A549 (cell line): ENCODE measurements at regions of chr6 and their contacts with region 1.

Region 1: DNA sequence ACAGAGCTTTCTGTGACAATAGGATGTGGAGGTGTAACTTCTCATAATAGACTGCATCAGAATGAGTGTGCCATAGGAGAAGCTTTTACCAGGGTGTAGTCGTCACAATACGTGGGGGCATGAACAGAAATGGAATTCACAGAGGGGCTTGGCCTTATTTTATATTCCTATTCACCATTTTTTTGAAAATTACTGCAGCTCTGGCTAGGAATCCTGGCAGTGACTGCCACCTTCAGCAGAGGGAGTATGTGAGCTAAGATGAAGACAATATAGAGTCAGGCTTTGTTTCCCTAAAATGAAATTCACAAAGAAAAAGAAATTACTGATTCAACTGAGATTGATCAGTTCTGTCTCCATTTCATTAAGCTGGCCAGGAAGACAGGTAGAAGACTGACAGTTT is 13.9 kb downstream of the TOMM6 start:
- DNase-seq: peak in 1 of 2 experiments; percentile 31
- ATAC-seq: peak; percentile 73 to 77; a peak in 4 of 6 replicates
- H3K4me3 ChIP-seq: no peak overlapping the region
- H3K27ac ChIP-seq: no peak overlapping the region
- H3K4me1 ChIP-seq: 0 out of 3 replicates have a peak, but pooled peaks cover 3% of the 10 kb centered on the region
- CTCF ChIP-seq: peak; percentile 50
- EP300 ChIP-seq: no peak
- POLR2A ChIP-seq: no peak
- RAD21 ChIP-seq: peak; percentile 64 to 69

Region 2: GRCh38 chr6:41430875-41431274 is 370.5 kb before region 1 on chr6:
- CTCF ChIA-PET with region 1: no interaction called
- POLR2A ChIA-PET with region 1: no interaction called
- DNase-seq: peak in 1 of 2 experiments; percentile 22
- ATAC-seq: peak; percentile 67 to 70; a peak in 5 of 6 replicates
- H3K4me3 ChIP-seq: no peak overlapping the region
- H3K27ac ChIP-seq: peak overlapping the region in 1 of 2 experiments; percentile 72; a peak in 3 of 6 replicates
- H3K4me1 ChIP-seq: peaks cover 15% of the 10 kb centered on the region
- CTCF ChIP-seq: no peak
- EP300 ChIP-seq: no peak
- POLR2A ChIP-seq: no peak
- RAD21 ChIP-seq: no peak

Region 3: GRCh38 chr6:41813469-41813868 is 12.1 kb after region 1 on chr6:
- CTCF ChIA-PET with region 1: interaction called, 14 read pairs
- POLR2A ChIA-PET with region 1: no interaction called
- DNase-seq: no peak
- ATAC-seq: no peak
- H3K4me3 ChIP-seq: no peak overlapping the region
- H3K27ac ChIP-seq: no peak overlapping the region
- H3K4me1 ChIP-seq: no peaks in the 10 kb centered on the region
- CTCF ChIP-seq: no peak
- EP300 ChIP-seq: no peak
- POLR2A ChIP-seq: no peak
- RAD21 ChIP-seq: no peak

Region 4: DNA sequence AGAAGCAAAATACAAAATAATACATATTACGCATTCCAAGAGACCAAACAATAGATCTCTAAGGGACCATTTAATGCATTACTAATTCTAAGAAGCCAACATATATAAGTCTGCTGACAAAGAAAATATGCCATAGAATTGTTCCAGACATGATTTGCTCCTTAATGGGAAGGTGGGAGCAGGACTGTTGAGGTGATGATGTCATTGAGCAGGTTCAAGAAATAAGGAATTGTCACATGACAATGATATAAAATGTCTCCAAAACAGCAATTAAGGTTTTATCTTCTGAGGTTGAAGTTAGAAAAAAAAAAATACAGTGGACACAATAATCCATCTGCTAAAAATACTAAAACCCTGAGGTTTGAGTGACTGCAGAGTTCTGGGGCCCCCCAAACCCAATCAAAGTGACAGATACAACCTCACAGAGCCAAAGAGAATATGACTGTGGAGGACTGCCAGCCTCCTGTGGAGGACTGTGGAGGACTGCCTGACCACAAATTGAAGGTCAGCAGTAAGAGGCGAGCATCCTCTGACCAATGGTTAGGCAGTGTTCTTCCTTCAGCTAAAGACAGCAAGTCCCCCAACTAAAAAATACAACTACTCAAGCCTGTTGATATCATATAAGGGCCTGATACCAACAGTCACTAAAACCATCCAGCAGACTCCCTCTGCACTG is 25.1 kb after region 1 on chr6:
- CTCF ChIA-PET with region 1: interaction called, 10 read pairs
- POLR2A ChIA-PET with region 1: no interaction called
- DNase-seq: no peak
- ATAC-seq: no peak
- H3K4me3 ChIP-seq: no peak overlapping the region
- H3K27ac ChIP-seq: no peak overlapping the region
- H3K4me1 ChIP-seq: peaks cover 16% of the 10 kb centered on the region
- CTCF ChIP-seq: no peak
- EP300 ChIP-seq: no peak
- POLR2A ChIP-seq: no peak
- RAD21 ChIP-seq: no peak

Region 5: GRCh38 chr6:41846666-41847237 is 45.4 kb after region 1 on chr6:
- CTCF ChIA-PET with region 1: interaction called, 21 read pairs
- POLR2A ChIA-PET with region 1: no interaction called
- DNase-seq: peak; percentile 55 to 79
- ATAC-seq: peak; percentile 96 to 98
- H3K4me3 ChIP-seq: no peak overlapping the region
- H3K27ac ChIP-seq: peak overlapping the region; percentile 71 to 87
- H3K4me1 ChIP-seq: peaks cover 15% of the 10 kb centered on the region
- CTCF ChIP-seq: peak; percentile 60
- EP300 ChIP-seq: no peak
- POLR2A ChIP-seq: no peak
- RAD21 ChIP-seq: peak; percentile 72 to 84

Region 6: DNA sequence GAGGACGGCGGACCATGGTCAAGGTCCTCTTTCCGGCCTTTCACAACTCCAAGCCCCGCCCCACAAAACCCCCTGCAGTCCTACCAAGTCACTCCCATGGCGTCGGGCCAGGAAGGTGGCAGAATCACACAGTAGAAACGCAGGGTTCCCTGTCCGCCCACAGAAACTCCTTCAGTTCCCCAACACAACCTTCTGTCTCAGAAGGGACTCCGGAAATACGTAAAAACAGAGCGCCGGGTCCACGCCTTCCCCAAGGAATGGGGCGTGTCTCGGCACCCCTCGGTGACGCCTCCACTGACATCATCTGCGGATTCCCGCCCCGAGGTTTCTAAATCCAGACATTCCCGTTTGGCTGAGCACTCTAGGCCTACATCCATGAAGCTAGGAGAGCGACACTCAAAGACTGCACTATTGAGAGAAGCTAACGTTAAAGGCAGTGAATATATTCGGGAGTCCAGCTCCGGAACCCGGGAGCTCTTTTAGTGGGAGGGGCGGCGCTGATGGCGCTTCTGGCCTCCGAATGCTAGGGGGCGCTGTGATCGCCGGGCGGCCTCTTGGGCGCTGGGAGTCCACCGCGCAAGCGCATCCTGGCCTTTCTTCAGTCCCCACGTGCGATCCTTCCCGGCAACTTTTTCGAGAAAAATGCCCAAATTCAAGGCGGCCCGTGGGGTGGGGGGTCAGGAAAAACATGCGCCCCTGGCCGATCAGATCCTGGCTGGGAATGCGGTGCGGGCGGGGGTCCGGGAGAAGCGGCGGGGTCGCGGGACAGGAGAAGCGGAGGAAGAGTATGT is 119.7 kb after region 1 on chr6 and contains the starts of genes BYSL and MED20:
- CTCF ChIA-PET with region 1: interaction called, 14 read pairs
- POLR2A ChIA-PET with region 1: interaction called, 3 read pairs
- DNase-seq: peak; percentile 86 to 97
- ATAC-seq: peak; percentile 88 to 94
- H3K4me3 ChIP-seq: peak within 1 kb of the TSS; percentile 80
- H3K27ac ChIP-seq: peak within 1 kb of the TSS; percentile 99
- H3K4me1 ChIP-seq: peaks cover 49% of the 10 kb centered on the region
- CTCF ChIP-seq: peak; percentile 81
- EP300 ChIP-seq: no peak
- POLR2A ChIP-seq: no peak; the same call in 1 of the 2 replicates
- RAD21 ChIP-seq: no peak
- polyA plus RNA-seq, gene BYSL: 28.8 and 38.7 TPM in 2 replicates
- polyA plus RNA-seq, gene MED20: 29.3 and 32.9 TPM in 2 replicates

Region 7: GRCh38 chr6:41936073-41936837 is 134.9 kb after region 1 on chr6:
- CTCF ChIA-PET with region 1: interaction called, 21 read pairs
- POLR2A ChIA-PET with region 1: no interaction called
- DNase-seq: peak; percentile 72 to 84
- ATAC-seq: peak; percentile 69 to 73
- H3K4me3 ChIP-seq: 0 out of 3 replicates have a peak overlapping the region, but pooled peaks have one; percentile 14
- H3K27ac ChIP-seq: peak overlapping the region; percentile 93 to 99
- H3K4me1 ChIP-seq: peaks cover 61% of the 10 kb centered on the region
- CTCF ChIP-seq: peak; percentile 47
- EP300 ChIP-seq: no peak
- POLR2A ChIP-seq: no peak
- RAD21 ChIP-seq: peak; percentile 50 to 60

Region 8: DNA sequence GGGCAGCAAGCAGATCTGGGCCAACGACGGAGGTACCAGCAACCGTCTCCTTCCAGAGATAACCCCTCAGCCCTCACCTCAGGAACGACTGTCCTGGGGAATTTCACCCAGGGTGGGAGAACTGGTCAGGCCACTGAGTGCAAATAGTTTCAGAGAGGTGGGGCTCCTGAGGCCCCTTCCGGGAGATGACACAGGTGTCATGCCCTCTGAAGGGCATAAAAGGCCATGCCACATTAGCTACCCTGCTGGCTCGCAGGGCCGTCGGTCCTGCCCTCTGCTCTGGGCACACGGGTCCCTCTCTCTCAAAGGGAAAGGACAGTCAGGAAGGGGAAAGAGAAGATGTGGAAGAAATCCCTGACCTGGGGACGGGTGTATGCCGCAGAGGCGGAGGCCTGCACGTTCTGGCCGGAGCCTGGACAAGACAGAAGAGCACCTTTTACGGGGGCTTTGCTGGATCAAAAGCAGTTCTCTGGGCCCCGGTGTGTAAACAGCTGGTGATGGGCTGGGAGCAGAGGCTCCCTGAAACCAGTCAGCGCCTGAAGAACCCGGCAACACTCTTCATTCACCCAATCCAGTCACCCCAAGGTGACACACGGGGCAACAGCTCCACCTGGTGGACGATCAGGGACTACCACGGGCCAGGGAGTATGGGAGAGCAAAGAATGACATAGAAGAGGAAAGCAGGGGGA is 242.6 kb after region 1 on chr6:
- CTCF ChIA-PET with region 1: interaction called, 70 read pairs
- POLR2A ChIA-PET with region 1: no interaction called
- DNase-seq: peak; percentile 81 to 82
- ATAC-seq: peak; percentile 87 to 92
- H3K4me3 ChIP-seq: no peak overlapping the region
- H3K27ac ChIP-seq: peak overlapping the region; percentile 88 to 96
- H3K4me1 ChIP-seq: peaks cover 66% of the 10 kb centered on the region
- CTCF ChIP-seq: peak; percentile 88
- EP300 ChIP-seq: no peak
- POLR2A ChIP-seq: no peak
- RAD21 ChIP-seq: peak; percentile 98